HEK293 (cell line): ENCODE measurements at regions of chr11 and their contacts with region 1.

Region 1: GRCh38 chr11:10076458-10077141 is 217.4 kb downstream of the SBF2 start:
- H3K4me3 ChIP-seq: no peak overlapping the region
- H3K27ac ChIP-seq: no peak overlapping the region
- H3K4me1 ChIP-seq: no peaks in the 10 kb centered on the region
- CTCF ChIP-seq: no peak

Region 2: GRCh38 chr11:10019906-10020682 is 56.5 kb before region 1 on chr11:
- CTCF ChIA-PET with region 1: interaction called, 10 read pairs
- POLR2A ChIA-PET with region 1: no interaction called
- H3K4me3 ChIP-seq: no peak overlapping the region
- H3K27ac ChIP-seq: no peak overlapping the region
- H3K4me1 ChIP-seq: no peaks in the 10 kb centered on the region
- CTCF ChIP-seq: no peak

Region 3: GRCh38 chr11:10091314-10092045 is 14.9 kb after region 1 on chr11:
- CTCF ChIA-PET with region 1: interaction called, 13 read pairs
- POLR2A ChIA-PET with region 1: no interaction called
- H3K4me3 ChIP-seq: no peak overlapping the region
- H3K27ac ChIP-seq: no peak overlapping the region
- H3K4me1 ChIP-seq: no peaks in the 10 kb centered on the region
- CTCF ChIP-seq: no peak

Region 4: DNA sequence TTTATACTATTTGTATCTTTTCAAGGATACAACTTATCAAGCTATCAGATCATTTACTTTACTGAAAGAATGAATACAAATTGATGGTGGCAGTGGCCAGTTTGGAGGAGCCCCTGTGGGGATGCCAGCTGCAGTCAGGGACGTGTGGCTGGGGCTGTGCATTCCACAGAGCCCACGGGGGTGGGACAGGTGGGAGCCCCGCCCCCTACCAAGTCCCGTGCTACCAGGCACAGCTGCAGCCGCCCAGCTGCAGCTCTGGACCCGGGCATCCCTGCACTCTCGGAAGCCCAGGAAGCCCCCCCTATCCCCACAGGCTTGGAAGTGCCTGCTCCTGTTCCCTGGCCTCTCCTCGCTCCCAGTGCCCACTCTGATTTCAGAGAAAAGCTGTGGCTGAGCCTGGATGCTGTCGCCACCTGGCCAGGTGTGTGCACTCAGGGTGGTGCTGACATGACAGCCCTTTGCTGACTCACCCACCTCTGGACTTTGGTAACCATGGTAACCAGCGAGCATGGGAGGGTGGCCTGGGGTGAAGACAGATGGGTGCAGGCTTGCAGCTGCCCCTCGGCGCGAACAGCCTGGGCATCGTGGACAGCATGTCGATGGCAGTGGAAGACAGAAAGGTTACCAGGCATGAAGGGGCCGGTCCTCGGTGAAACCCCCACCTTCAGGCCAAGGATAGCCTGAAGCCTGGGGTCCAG is 79.3 kb after region 1 on chr11:
- CTCF ChIA-PET with region 1: no interaction called
- POLR2A ChIA-PET with region 1: no interaction called
- H3K4me3 ChIP-seq: no peak overlapping the region
- H3K27ac ChIP-seq: no peak overlapping the region
- H3K4me1 ChIP-seq: no peaks in the 10 kb centered on the region
- CTCF ChIP-seq: no peak

Region 5: DNA sequence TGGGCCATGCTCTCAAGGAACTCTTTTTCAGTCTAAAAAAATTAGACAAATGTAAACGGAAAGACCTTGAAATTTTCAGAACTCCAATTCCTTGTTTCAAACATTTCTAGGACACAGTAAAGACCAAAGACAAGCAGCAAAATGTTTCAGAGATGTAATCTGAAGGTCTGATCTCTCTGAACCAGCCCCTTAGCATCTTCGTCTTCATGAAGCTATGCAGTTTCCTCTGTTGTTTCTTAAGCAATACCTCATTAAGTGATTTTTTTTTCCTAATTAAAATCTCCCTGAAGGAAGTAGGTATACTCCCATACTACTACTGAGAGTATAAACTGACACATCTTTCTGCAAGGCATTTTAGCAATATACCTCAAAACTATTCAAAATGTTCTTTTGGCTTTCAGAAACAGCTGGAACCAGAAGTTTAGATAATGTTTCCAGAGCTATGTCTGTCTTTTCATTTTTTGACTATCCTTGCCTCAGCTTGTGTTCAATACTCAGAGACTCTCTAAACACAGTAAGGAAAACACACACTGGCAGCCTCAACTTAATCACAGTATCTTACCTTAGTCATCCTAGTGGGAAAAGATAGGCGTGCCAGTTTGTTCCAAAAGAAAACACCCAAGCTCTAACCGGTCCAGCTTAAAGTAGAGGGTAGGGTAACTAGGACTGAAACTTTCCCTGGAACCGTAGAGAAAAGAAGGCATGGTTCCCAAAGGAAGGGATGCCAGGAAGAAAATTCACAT is 192.3 kb after region 1 on chr11:
- CTCF ChIA-PET with region 1: no interaction called
- POLR2A ChIA-PET with region 1: no interaction called
- H3K4me3 ChIP-seq: no peak overlapping the region
- H3K27ac ChIP-seq: no peak overlapping the region
- H3K4me1 ChIP-seq: no peaks in the 10 kb centered on the region
- CTCF ChIP-seq: no peak